HEK293 (cell line): ENCODE measurements at regions of chr19 and their contacts with region 1.

Region 1: DNA sequence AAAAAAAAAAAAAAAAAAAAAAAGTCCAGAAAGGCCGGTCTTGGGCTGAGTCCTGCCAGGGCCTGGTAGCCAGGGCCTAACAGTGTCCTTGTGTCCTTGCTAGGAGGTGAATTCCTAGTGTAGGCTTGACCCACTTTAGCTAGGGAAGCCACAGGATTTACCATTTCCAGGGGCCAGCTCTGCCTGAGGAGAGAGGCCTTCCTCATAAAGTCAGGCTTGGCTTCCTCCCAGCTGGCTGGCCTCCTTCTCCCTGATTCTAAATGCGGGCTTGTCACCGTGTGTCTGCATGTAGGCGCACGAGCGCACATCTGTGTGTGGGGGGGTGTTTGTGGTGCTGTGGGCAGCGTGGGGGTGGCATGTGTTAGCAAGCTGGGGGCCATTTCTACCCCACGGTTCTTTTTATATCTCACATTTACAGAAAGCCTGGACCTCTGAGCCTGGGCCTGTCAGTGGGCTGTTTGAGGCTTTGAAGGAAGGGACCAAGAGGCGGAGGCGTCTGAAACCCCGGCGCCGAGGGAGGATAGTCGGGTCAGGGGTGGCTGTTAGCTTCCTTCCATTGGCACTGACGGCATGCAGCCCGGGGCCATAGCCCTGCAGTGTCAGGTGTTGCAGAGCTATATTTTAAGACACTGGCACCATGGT is 31.7 kb downstream of the IER2 start:
- H3K4me3 ChIP-seq: no peak overlapping the region
- H3K27ac ChIP-seq: peak overlapping the region; percentile 17
- H3K4me1 ChIP-seq: no peaks in the 10 kb centered on the region; the same call in 1 of the 2 replicates
- CTCF ChIP-seq: no peak

Region 2: DNA sequence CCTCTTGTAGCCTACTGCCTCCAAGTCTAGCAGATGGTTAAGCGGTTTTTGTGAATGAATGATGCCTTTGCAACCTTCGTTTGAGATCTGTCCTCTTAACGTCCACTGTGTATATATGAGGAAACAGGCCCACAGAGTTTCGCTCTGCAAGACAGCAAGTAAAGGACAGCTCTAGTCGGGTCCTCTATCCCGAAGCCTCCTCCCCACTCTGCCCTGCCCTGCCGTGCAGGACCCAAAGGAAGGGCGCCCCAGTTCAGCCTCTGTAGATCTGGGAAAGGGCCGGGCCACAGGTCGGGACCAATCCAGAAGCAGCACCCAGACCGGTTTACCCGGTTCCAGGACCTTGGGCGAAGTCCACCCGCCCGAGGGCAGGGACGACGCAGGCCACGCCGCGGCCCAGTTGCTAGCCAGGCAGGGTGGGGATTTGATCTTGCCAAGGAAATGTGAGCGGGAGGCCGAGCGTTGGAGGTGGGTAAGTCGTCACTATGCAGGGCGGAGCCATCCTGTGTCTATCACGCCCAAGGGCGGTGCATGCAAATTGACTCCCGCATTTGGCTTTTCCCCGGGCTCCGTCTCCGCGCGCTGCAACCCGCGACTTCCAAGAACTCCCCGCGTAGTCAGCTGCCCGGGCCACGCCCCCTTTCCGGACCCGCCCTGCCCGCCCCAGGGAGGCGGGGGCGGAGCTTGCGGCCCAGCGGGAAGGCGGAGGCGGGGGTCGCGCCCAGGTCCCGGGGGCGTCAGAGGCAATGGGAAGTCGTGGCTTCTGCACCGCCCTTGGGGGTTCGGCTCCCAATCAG is 19.2 kb before region 1 on chr19:
- CTCF ChIA-PET with region 1: no interaction called
- POLR2A ChIA-PET with region 1: interaction called, 17 read pairs
- H3K4me3 ChIP-seq: peak overlapping the region; percentile 20
- H3K27ac ChIP-seq: peak overlapping the region; percentile 72
- H3K4me1 ChIP-seq: peaks cover 17% of the 10 kb centered on the region
- CTCF ChIP-seq: no peak